ENCODE measurements at regions of chr4 and their contacts with region 1.

Region 1: GRCh38 chr4:111641955-111642579 is 503.2 kb upstream of the FAM241A start:
- DNase-seq: peak; percentile 31 to 60 (median 37)
- ATAC-seq: peak; percentile 71; the same call in 2 of the 3 replicates
- H3K4me3 ChIP-seq: no peak overlapping the region
- H3K27ac ChIP-seq: no peak overlapping the region
- H3K4me1 ChIP-seq: no peaks in the 10 kb centered on the region
- H3K27me3 ChIP-seq: no peaks in the 10 kb centered on the region
- CTCF ChIP-seq: peak; percentile 52 to 86 (median 66)
- EP300 ChIP-seq: no peak
- POLR2A ChIP-seq: no peak
- RAD21 ChIP-seq: peak; percentile 44 to 62; a peak in 2 of 4 replicates

Region 2: GRCh38 chr4:111854494-111855087 is 212.5 kb after region 1 on chr4:
- CTCF ChIA-PET with region 1: no interaction called
- POLR2A ChIA-PET with region 1: no interaction called
- in situ Hi-C with region 1: no loop called
- intact Hi-C with region 1: loop called (anchors 10 kb)
- DNase-seq: peak; percentile 8 to 23 (median 20)
- ATAC-seq: 0 out of 3 replicates have a peak, but pooled peaks have one; percentile 56
- H3K4me3 ChIP-seq: no peak overlapping the region
- H3K27ac ChIP-seq: no peak overlapping the region
- H3K4me1 ChIP-seq: no peaks in the 10 kb centered on the region
- H3K27me3 ChIP-seq: no peaks in the 10 kb centered on the region
- CTCF ChIP-seq: peak; percentile 21 to 49 (median 42); a peak in 5 of 6 replicates
- EP300 ChIP-seq: no peak
- POLR2A ChIP-seq: no peak
- RAD21 ChIP-seq: peak; percentile 32 to 64; a peak in 3 of 4 replicates